ENCODE measurements at regions of chr7 and their contacts with region 1.

Region 1: DNA sequence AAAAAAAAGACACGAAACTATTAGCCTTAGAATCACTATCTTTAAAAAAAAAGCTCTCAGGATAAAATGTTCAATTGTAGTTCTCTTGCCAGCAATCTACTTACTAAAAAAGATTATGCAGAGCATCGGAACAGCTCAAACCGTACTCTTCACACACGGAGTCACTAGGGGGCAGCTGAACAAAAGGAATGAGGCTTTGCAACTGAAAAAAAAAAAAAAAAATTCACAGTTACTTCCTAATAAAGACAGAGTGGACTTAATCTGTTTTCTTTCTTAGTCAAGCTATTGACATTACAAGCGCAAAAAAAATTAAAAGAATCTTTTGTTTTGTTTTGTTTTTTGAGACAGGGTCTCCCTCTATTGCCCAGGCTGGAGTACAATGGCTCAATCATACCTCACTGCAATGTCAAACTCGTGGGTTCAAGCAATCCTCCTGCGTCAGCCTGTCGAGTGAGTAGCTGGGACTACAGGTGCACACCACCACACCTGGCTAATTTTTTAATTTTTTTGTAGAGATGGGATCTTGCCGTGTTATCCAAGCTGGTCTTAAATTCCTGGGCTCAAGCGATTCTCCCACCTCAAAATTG is 11.5 kb downstream of the PMS2 start:
- DNase-seq: no peak
- ATAC-seq: peak; percentile 71
- H3K4me3 ChIP-seq: no peak overlapping the region
- H3K27ac ChIP-seq: no peak overlapping the region
- H3K4me1 ChIP-seq: no peaks in the 10 kb centered on the region
- H3K27me3 ChIP-seq: no peaks in the 10 kb centered on the region
- CTCF ChIP-seq: peak; percentile 52 to 61 (median 56)
- EP300 ChIP-seq: no peak
- POLR2A ChIP-seq: no peak
- RAD21 ChIP-seq: peak; percentile 76

Region 2: DNA sequence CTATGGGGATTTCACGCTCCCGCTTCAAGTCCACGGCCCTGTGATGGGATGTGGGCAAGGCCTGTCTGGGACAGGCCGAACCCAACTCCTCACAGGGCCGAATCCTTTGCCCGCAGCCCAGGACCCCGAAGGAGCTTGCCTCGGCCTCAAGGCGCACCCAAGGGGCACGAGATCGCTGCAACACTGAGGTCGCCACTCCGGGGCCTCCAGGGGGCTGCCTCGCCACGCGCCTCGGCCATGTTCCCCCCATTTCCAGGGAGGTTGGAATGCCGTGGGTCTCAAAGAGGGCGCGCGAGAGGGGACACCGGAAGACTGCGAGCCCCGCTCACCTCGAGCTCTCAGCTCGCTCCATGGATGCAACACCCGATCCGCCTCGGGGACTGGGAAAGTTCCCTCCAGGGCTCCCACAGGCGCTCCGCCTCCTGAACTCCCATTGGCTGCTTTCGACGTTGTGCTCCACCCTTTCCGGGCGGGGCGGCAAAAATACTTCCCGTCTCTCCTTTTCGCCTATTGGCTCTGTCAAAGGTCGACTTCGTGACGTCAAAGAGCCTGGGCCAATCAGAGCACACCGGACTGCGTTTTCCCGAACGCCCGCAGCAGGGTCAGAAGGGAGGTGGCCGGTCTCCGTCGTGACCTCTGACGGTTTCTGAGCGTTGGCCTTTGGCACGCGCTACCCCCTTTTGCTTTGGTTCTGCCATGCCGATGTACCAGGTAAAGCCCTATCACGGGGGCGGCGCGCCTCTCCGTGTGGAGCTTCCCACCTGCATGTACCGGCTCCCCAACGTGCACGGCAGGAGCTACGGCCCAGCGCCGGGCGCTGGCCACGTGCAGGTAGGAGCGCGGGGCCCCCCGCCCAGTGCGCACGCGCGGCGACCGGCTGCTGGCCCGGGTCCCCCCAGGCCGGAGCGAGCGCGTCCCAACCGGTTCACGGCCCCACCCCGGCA is 11.6 kb after region 1 on chr7 and contains the starts of genes AIMP2 and PMS2:
- CTCF ChIA-PET with region 1: interaction called, 13 read pairs
- POLR2A ChIA-PET with region 1: interaction called, 5 read pairs
- RAD21 ChIA-PET with region 1: interaction called, 10 read pairs
- SMC1A ChIA-PET with region 1: interaction called, 24 read pairs
- in situ Hi-C with region 1: no loop called
- intact Hi-C with region 1: no loop called
- DNase-seq: peak; percentile 96
- ATAC-seq: peak; percentile 95
- H3K4me3 ChIP-seq: peak within 1 kb of the TSS; percentile 93
- H3K27ac ChIP-seq: peak within 1 kb of the TSS; percentile 89
- H3K4me1 ChIP-seq: 0 out of 2 replicates have a peak, but pooled peaks cover 2% of the 10 kb centered on the region
- H3K27me3 ChIP-seq: no peaks in the 10 kb centered on the region
- CTCF ChIP-seq: peak; percentile 8 to 23 (median 18); a peak in 2 of 6 replicates
- EP300 ChIP-seq: no peak
- POLR2A ChIP-seq: peak; percentile 86
- RAD21 ChIP-seq: no peak
- polyA plus RNA-seq, gene AIMP2: 55.6 to 80.0 TPM
- polyA plus RNA-seq, gene PMS2: 3.6 to 4.7 TPM

Region 3: DNA sequence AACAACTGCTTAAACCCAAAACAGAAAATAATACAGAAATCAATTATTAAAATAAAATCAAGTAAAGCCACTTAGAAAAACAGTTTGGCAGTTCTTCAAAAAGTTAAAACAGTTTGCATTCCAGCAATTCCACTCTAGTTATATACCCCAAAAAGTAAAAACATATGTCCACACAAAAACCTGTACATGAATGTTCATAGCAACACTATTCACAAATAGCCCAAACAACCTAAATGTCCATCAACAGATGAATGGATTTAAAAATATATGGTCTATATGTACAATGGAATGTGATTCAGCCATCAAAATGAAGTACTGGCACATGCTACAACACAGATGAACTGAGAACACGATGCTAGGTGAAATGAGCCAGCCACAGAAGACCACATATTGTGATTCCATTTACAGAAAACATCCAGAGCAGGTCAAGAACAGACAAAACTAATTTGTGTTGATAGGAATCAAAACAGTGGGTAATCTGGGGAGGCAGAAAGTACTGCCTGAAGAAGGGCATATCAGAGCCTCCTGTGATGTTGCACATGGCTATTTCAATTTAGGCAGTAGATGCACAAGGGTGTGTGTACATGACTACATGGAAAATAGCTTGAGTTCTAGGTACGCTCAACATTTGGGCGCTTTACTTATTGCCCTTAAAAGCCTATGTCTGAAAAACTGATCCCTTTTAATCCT is 208.8 kb after region 1 on chr7:
- CTCF ChIA-PET with region 1: no interaction called
- POLR2A ChIA-PET with region 1: no interaction called
- RAD21 ChIA-PET with region 1: no interaction called
- SMC1A ChIA-PET with region 1: no interaction called
- in situ Hi-C with region 1: no loop called
- intact Hi-C with region 1: no loop called
- DNase-seq: no peak
- ATAC-seq: peak; percentile 32; the same call in 2 of the 3 replicates
- H3K4me3 ChIP-seq: no peak overlapping the region
- H3K27ac ChIP-seq: no peak overlapping the region
- H3K4me1 ChIP-seq: no peaks in the 10 kb centered on the region
- H3K27me3 ChIP-seq: no peaks in the 10 kb centered on the region
- CTCF ChIP-seq: no peak
- EP300 ChIP-seq: no peak
- POLR2A ChIP-seq: no peak
- RAD21 ChIP-seq: no peak

Region 4: DNA sequence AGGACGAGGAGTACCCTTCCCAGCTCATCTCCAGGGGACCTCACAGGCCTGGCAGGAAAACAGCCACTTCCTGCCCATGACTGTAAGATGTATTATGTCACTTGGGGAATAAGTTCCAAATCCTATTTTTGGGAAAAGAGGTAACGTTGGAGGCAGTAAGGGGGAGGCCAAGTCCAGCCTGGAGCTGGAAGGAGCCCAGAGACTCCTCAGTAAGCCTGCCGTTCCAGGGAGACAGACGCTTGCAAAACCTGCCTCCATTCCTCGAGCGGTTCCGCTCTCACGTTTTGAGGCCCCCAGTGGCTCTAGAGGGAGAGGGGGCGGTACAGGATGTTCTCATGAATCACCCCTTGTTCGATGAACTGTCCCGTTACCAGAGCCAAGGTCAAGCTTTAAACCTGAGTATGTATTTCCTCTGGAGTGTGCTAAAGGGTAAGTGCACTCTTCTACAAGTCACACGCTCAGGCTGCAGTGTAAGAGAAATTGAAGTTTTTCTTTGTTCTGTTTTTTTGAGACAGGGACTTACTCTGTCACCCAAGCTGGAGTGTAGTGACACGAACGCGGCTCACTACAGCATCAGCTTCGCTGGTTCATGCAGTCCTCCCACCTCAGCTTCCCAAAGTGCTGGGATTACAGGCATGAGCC is 320.6 kb after region 1 on chr7:
- CTCF ChIA-PET with region 1: interaction called, 20 read pairs
- POLR2A ChIA-PET with region 1: interaction called, 3 read pairs
- RAD21 ChIA-PET with region 1: interaction called, 6 read pairs
- SMC1A ChIA-PET with region 1: interaction called, 8 read pairs
- in situ Hi-C with region 1: no loop called
- intact Hi-C with region 1: loop called (anchors 2 kb)
- DNase-seq: no peak
- ATAC-seq: no peak
- H3K4me3 ChIP-seq: no peak overlapping the region
- H3K27ac ChIP-seq: no peak overlapping the region; the same call in 1 of the 2 replicates
- H3K4me1 ChIP-seq: 0 out of 2 replicates have a peak, but pooled peaks cover 2% of the 10 kb centered on the region
- H3K27me3 ChIP-seq: no peaks in the 10 kb centered on the region
- CTCF ChIP-seq: no peak
- EP300 ChIP-seq: no peak
- POLR2A ChIP-seq: no peak
- RAD21 ChIP-seq: no peak